Heart left ventricle (tissue), 16 donors: ENCODE measurements at regions of chr5 and their contacts with region 1.

Region 1: GRCh38 chr5:131406975-131407638 is 143.3 kb downstream of the CDC42SE2 start:
- DNase-seq: no peak
- ATAC-seq: no peak
- H3K4me3 ChIP-seq: no peak overlapping the region
- H3K27ac ChIP-seq: no peak overlapping the region
- H3K4me1 ChIP-seq: no peaks in the 10 kb centered on the region
- H3K27me3 ChIP-seq: no peaks in the 10 kb centered on the region
- CTCF ChIP-seq: no peak
- POLR2A ChIP-seq: no peak

Region 2: DNA sequence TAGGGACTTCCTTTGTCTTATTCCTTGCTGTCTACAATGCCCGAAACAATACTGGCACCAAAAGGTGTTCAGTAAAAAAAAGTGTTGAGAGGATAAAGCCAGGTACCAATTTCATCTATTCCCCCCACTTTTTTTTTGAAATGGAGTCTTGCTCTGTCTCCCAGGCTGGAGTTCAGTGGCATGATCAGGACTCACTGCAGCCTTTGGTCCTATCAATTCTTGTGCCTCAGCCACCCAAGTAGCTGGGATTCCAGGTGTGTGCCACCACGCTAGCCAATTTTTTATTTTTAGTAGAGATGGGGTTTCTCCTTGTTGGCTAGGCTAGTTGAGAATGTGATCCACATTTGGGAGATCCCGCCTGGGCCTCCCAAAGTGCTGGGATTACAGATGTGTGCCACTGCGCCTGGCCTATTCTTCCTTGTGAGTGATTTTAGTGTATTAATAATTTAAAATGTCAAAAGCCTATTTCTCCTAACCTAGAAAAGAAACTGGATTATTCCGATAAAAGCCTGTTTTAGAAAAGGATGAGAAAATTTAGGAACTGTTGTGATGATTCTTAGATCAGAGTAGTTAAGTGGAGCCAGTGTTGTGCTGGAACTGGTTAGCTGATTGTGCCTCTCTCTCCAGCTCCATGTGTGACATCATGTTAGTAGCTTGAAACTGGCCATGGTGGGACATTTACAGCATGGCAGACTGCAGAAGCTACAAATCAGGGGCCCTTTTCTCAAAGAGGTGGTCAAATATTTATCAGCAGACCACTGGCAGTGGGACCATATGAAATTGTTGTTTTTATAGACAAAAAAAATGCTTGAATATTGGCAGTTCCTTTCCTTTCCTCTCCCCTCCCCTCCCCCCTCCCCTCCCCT is 129.0 kb before region 1 on chr5:
- intact Hi-C with region 1: loop called in 1 of 10 experiments (anchors 10 kb)
- DNase-seq: no peak
- ATAC-seq: no peak
- H3K4me3 ChIP-seq: no peak overlapping the region
- H3K27ac ChIP-seq: peak overlapping the region in 1 of 12 donors; percentile 34
- H3K4me1 ChIP-seq: peaks cover 0 to 79% (median 4%) of the 10 kb centered on the region in 12 donors
- H3K27me3 ChIP-seq: no peaks in the 10 kb centered on the region
- CTCF ChIP-seq: no peak
- POLR2A ChIP-seq: no peak

Region 3: GRCh38 chr5:131305906-131306305 is 101.2 kb before region 1 on chr5:
- intact Hi-C with region 1: no loop called
- DNase-seq: no peak
- ATAC-seq: no peak
- H3K4me3 ChIP-seq: no peak overlapping the region
- H3K27ac ChIP-seq: no peak overlapping the region
- H3K4me1 ChIP-seq: peaks cover 0 to 33% (median 3%) of the 10 kb centered on the region in 12 donors
- H3K27me3 ChIP-seq: no peaks in the 10 kb centered on the region
- CTCF ChIP-seq: no peak
- POLR2A ChIP-seq: no peak

Region 4: GRCh38 chr5:131466171-131466766 is 59.2 kb after region 1 on chr5:
- intact Hi-C with region 1: no loop called
- DNase-seq: no peak
- ATAC-seq: no peak
- H3K4me3 ChIP-seq: no peak overlapping the region
- H3K27ac ChIP-seq: no peak overlapping the region
- H3K4me1 ChIP-seq: peaks cover 0 to 20% (median 0%) of the 10 kb centered on the region in 12 donors
- H3K27me3 ChIP-seq: no peaks in the 10 kb centered on the region
- CTCF ChIP-seq: no peak
- POLR2A ChIP-seq: no peak

Region 5: GRCh38 chr5:131595088-131596033 is 188.3 kb after region 1 on chr5:
- intact Hi-C with region 1: no loop called
- DNase-seq: no peak
- ATAC-seq: no peak
- H3K4me3 ChIP-seq: no peak overlapping the region
- H3K27ac ChIP-seq: peak overlapping the region in 1 of 12 donors; percentile 35
- H3K4me1 ChIP-seq: peaks cover 0 to 22% (median 11%) of the 10 kb centered on the region in 12 donors
- H3K27me3 ChIP-seq: no peaks in the 10 kb centered on the region
- CTCF ChIP-seq: no peak
- POLR2A ChIP-seq: no peak